PC-9 (cell line): ENCODE measurements at regions of chr3 and their contacts with region 1.

Region 1: DNA sequence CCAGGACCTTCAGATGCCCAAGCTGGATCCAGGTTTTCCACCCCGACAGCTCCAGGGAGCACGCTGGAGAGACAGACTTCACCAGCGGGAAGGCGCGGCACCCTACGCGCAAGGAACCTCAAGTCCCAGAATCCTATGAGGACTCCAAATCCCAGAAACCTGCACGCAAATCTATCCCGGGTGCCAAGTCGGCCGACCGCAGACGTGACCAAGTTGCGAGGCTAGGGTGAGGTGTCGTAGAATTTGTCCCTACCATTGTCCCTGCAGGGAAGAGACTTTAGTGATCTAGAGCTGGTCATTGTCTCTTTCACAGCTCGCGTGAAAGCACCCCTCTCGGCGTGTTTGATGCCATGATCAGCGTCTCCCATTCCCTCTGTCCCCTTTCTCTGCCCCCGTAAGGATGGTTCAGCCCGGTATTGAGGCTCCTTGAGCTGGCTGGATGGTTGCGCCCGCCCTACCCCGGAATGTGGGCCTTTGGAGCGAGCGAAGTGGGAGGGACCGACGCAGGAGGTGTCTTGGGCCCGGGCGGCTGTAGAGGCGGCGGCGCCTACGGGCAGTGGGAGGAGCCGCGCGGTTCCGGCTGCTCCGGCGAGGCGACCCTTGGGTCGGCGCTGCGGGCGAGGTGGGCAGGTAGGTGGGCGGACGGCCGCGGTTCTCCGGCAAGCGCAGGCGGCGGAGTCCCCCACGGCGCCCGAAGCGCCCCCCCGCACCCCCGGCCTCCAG is at the start of gene PRKCI:
- DNase-seq: peak; percentile 95 to 97
- H3K4me3 ChIP-seq: peak within 1 kb of the TSS; percentile 68
- H3K27ac ChIP-seq: peak within 1 kb of the TSS; percentile 88
- H3K4me1 ChIP-seq: peaks cover 36% of the 10 kb centered on the region
- H3K27me3 ChIP-seq: no peaks in the 10 kb centered on the region
- CTCF ChIP-seq: no peak
- total RNA-seq, gene PRKCI: 85.4 and 104 TPM in 2 replicates

Region 2: DNA sequence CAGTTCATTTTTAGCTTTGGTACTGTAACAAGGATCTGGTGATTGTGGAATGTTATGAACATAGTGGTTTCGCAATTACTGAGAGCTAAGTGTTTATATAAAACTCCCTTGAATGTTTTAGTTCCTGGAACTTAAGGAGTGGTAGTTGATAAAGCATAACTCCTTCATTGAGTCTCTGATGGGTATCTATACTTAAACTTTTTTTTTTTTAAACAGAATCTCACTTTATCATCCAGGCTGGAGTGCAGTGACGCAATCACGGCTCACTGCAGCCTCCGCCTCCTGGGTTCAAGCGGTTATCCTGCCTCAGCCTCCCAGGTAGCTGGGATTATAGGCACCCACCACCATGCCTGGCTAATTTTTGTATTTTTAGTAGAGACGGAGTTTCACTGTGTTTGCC is 11.4 kb after region 1 on chr3:
- CTCF ChIA-PET with region 1: no interaction called
- POLR2A ChIA-PET with region 1: interaction called, 10 read pairs
- intact Hi-C with region 1: no loop called
- DNase-seq: peak; percentile 45 to 91
- H3K4me3 ChIP-seq: no peak overlapping the region
- H3K27ac ChIP-seq: peak overlapping the region; percentile 54
- H3K4me1 ChIP-seq: peaks cover 24% of the 10 kb centered on the region
- H3K27me3 ChIP-seq: no peaks in the 10 kb centered on the region
- CTCF ChIP-seq: no peak

Region 3: DNA sequence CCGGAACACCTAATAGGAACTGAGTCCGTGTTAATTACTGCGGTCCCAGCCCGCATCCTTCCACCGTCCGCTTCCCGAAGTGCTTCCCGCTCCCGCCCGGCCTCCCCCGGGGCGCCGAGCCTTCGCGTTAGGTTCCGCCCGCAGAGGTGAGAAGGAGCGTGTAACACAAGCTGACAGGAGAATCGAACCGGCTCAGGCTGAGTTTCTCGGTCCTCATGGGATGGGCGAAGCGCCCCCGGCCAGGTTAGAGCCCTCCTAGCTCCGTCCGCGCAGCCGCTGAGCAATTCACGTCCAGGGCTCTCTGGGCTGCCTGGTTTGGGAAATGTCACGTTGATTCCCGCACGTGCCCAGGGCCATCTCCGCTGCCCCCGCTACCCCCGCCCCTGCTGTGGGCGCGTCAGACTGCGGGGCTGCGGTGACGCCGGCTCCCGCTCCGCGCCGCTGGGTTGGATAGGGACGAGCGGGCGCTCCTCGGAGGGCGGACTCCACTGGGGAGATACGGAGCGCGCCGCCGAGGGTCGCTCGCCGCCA is 197.5 kb after region 1 on chr3:
- CTCF ChIA-PET with region 1: no interaction called
- POLR2A ChIA-PET with region 1: no interaction called
- intact Hi-C with region 1: no loop called
- DNase-seq: no peak
- H3K4me3 ChIP-seq: no peak overlapping the region
- H3K27ac ChIP-seq: no peak overlapping the region
- H3K4me1 ChIP-seq: no peaks in the 10 kb centered on the region
- H3K27me3 ChIP-seq: no peaks in the 10 kb centered on the region
- CTCF ChIP-seq: no peak